Activated T-helper 1 cell treated with anti-CD3 and anti-CD28 coated beads, Interleukin-12 subunit alpha, Interleukin-12 subunit beta, Interleukin-2, Interleukin-4 antibody, amounts not matched to agents 30 ng/mL and 10 ng/mL and 1 ng/mL, durations not matched to agents 14 hours and 24 hours and 36 hours (primary cell): ENCODE measurements at regions of chr9 and their contacts with region 1.

Region 1: GRCh38 chr9:131502781-131503625 is at the start of gene POMT1:
- DNase-seq: peak; percentile 90
- H3K4me3 Mint-ChIP-seq: peak within 1 kb of the TSS; percentile 93
- H3K27ac Mint-ChIP-seq: peak within 1 kb of the TSS; percentile 90
- H3K4me1 Mint-ChIP-seq: peaks cover 48% of the 10 kb centered on the region
- H3K27me3 Mint-ChIP-seq: no peaks in the 10 kb centered on the region
- total RNA-seq, gene POMT1: 39.1 and 39.3 TPM in 2 replicates

Region 2: GRCh38 chr9:131349881-131350563 is 153.0 kb before region 1 on chr9:
- intact Hi-C with region 1: loop called (anchors 1 kb)
- DNase-seq: peak; percentile 78
- H3K4me3 Mint-ChIP-seq: peak overlapping the region; percentile 54
- H3K27ac Mint-ChIP-seq: no peak overlapping the region
- H3K4me1 Mint-ChIP-seq: peaks cover 9% of the 10 kb centered on the region
- H3K27me3 Mint-ChIP-seq: peaks cover 10% of the 10 kb centered on the region

Region 3: DNA sequence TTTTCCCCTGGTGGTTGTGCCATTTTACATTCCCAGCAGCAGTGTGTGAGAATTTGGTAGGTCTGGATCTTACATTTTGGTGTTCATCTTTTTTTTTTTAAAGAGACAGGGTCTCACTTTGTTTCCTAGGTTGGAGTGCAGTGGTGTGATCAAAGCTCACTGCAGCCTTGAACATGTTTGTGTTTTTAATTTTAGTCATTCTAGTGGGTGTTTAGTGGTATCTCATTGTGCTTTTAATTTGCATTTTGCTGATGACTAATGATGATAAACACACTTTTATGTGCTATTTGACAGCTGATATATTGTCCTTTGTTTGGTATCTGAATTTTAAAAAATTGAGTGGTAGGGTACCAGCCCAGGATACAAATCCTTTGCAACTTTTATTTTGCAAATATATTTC is 53.7 kb before region 1 on chr9:
- intact Hi-C with region 1: loop called (anchors 1 kb)
- DNase-seq: no peak
- H3K4me3 Mint-ChIP-seq: no peak overlapping the region
- H3K27ac Mint-ChIP-seq: peak overlapping the region; percentile 9
- H3K4me1 Mint-ChIP-seq: peaks cover 21% of the 10 kb centered on the region
- H3K27me3 Mint-ChIP-seq: no peaks in the 10 kb centered on the region

Region 4: GRCh38 chr9:131464354-131465000 is 38.5 kb before region 1 on chr9:
- intact Hi-C with region 1: no loop called
- DNase-seq: no peak
- H3K4me3 Mint-ChIP-seq: no peak overlapping the region
- H3K27ac Mint-ChIP-seq: no peak overlapping the region
- H3K4me1 Mint-ChIP-seq: no peaks in the 10 kb centered on the region
- H3K27me3 Mint-ChIP-seq: no peaks in the 10 kb centered on the region

Region 5: DNA sequence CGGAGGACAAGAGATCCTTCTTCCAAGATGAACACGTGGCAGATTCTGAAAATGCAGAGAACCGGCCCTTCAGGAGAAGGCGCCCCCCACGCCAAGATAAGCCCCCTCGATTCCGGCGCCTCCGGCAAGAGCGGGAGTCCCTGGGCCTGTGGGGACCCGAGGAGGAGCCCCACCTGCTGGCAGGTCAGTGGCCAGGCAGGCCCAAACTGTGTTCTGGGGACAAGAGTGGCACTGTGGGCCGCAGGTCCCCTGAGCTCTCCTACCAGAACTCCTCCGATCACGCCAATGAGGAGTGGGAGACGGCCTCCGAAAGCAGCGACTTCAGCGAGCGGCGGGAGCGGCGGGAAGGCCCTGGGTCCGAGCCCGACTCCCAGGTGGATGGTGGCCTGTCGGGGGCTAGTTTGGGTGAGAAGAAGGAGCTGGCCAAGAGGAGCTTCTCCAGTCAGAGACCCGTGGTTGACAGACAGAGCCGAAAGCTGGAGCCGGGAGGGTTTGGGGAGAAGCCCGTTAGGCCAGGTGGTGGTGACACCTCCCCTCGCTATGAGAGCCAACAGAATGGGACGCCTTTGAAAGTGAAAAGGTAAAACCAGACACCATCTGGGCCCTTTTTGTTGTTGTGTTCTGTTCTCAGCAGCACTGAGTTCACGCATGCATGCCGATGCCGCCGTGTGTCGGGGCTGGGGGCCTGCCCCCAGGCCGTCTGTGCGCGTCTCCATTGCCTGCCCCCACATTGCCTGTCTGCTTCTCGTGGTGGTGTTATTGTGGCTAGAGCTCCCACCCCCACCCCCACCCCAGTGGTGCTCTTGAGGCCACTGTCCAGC is 26.8 kb before region 1 on chr9:
- intact Hi-C with region 1: no loop called
- DNase-seq: no peak
- H3K4me3 Mint-ChIP-seq: no peak overlapping the region
- H3K27ac Mint-ChIP-seq: no peak overlapping the region
- H3K4me1 Mint-ChIP-seq: no peaks in the 10 kb centered on the region
- H3K27me3 Mint-ChIP-seq: no peaks in the 10 kb centered on the region

Region 6: GRCh38 chr9:131546336-131547084 is 43.5 kb after region 1 on chr9:
- intact Hi-C with region 1: no loop called
- DNase-seq: no peak
- H3K4me3 Mint-ChIP-seq: peak overlapping the region; percentile 52
- H3K27ac Mint-ChIP-seq: no peak overlapping the region
- H3K4me1 Mint-ChIP-seq: no peaks in the 10 kb centered on the region
- H3K27me3 Mint-ChIP-seq: peaks cover 61% of the 10 kb centered on the region

Region 7: GRCh38 chr9:131627648-131628458 is 124.8 kb after region 1 on chr9:
- intact Hi-C with region 1: loop called (anchors 5 kb)
- DNase-seq: peak; percentile 61
- H3K4me3 Mint-ChIP-seq: peak overlapping the region; percentile 32
- H3K27ac Mint-ChIP-seq: peak overlapping the region; percentile 89
- H3K4me1 Mint-ChIP-seq: peaks cover 71% of the 10 kb centered on the region
- H3K27me3 Mint-ChIP-seq: peaks cover 2% of the 10 kb centered on the region

Region 8: GRCh38 chr9:132240753-132241493 is 737.9 kb after region 1 on chr9:
- intact Hi-C with region 1: loop called (anchors 5 kb)
- DNase-seq: peak; percentile 98
- H3K4me3 Mint-ChIP-seq: peak overlapping the region; percentile 94
- H3K27ac Mint-ChIP-seq: peak overlapping the region; percentile 78
- H3K4me1 Mint-ChIP-seq: peaks cover 15% of the 10 kb centered on the region
- H3K27me3 Mint-ChIP-seq: peaks cover 8% of the 10 kb centered on the region

Region 9: DNA sequence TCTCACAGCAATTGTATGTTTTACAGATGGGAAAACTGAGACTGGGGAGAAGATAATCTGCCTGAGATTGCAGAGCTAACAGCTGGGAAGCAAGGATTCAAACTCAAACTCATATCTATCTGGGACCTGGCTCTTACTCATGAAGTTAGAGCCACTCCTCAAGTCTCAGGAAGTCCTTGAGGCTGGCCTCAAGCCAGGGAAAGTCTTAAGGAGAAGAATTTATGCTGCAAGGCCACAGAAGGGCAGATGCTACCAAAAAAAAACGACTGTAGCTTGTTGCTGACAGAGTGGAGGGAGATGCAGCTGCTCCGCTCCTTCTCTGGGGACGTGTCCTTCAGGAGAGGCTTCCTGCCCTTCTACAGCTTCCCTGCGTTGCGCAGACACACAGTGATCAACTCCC is 1119.2 kb after region 1 on chr9:
- intact Hi-C with region 1: no loop called
- DNase-seq: no peak
- H3K4me3 Mint-ChIP-seq: no peak overlapping the region
- H3K27ac Mint-ChIP-seq: no peak overlapping the region
- H3K4me1 Mint-ChIP-seq: no peaks in the 10 kb centered on the region
- H3K27me3 Mint-ChIP-seq: no peaks in the 10 kb centered on the region